Calu3 (cell line): ENCODE measurements at regions of chr1 and their contacts with region 1.

Region 1: DNA sequence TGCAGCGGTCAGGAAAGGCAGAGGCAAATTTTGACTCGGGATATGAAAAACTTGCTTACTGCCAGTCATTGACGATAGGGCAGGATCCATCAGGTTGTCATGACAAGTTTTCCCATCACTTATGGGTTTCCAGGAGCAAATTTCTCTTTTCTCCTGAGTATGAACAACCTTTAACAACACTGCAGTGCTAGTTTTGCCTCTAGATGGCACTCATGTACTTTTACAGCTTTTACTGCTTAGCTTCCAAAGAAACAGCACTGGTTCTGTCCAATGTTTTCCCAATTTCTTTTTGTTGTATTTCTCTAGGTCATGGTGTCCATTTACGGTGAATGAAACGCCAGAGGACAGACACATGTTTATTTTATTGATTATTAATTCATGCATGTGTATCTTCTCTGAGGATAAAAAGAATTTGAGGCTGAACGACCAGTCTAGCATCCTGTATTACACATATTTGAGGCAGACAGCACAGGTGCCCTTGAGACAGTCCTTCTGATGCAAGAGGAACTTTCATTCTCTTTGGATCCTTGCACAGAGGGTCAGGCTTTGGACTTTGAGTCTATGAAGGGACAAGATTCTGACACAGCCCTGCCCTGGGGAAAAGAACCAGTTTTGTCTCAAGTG is 112.3 kb upstream of the TRABD2B start:
- DNase-seq: peak; percentile 44
- H3K4me3 Mint-ChIP-seq: no peak overlapping the region
- H3K27ac Mint-ChIP-seq: no peak overlapping the region
- H3K4me1 Mint-ChIP-seq: no peaks in the 10 kb centered on the region
- H3K27me3 Mint-ChIP-seq: peaks cover 42% of the 10 kb centered on the region
- CTCF ChIP-seq: peak; percentile 81

Region 2: DNA sequence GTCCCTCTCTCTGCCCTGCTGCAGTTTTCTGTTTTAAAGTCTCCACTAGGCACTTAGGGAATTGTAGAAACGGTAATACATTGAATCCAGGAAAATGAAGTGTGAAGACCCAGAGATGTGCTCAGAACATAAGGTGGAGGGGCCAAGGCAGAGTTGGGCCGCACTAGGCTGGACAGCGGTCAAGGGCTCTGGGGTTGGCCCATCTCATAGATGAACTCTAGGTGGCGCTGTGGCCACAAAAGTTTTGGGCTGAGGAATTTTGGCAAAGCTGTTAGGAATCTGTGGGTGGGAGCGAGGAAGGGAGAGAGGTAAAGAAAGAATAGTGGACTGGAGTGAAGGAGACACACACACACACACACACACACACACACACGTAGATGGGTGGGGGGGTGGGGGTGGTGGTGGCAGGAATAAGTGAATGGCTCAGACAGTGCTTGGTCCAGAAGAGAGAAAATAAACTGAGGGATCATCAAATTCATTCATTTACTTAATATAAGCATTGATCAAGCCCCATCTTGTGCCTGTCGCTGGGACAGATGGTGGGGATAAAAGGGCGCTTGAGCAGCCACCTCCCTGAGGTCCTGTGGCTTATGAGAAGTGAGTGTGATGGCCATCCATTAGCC is 370.8 kb before region 1 on chr1:
- CTCF ChIA-PET with region 1: no interaction called
- intact Hi-C with region 1: loop called (anchors 10 kb)
- DNase-seq: peak; percentile 72
- H3K4me3 Mint-ChIP-seq: no peak overlapping the region
- H3K27ac Mint-ChIP-seq: no peak overlapping the region
- H3K4me1 Mint-ChIP-seq: no peaks in the 10 kb centered on the region
- H3K27me3 Mint-ChIP-seq: peaks cover 33% of the 10 kb centered on the region
- CTCF ChIP-seq: peak; percentile 66

Region 3: DNA sequence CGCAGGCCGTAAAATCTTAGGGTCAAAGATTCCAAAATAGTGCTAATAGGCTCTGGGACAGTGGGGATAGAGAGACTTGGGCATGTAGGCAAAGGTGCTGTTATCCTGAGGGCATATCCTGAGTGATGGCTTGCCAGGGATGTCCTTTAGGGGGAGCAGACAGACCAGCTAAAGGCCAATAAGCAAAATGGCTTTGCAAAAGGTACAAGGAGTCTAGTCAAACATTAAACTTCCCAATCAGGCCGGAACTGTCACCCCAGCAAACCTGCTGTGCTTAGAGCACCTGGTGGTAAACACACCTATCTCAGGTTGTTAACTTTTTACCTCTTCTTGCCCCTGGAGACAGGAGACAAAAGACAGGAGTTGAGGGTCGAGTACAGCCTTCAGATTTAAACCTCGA is 161.4 kb before region 1 on chr1:
- CTCF ChIA-PET with region 1: no interaction called
- intact Hi-C with region 1: loop called (anchors 1 kb)
- DNase-seq: peak; percentile 73
- H3K4me3 Mint-ChIP-seq: no peak overlapping the region
- H3K27ac Mint-ChIP-seq: no peak overlapping the region
- H3K4me1 Mint-ChIP-seq: peaks cover 53% of the 10 kb centered on the region
- H3K27me3 Mint-ChIP-seq: no peaks in the 10 kb centered on the region
- CTCF ChIP-seq: peak; percentile 62

Region 4: DNA sequence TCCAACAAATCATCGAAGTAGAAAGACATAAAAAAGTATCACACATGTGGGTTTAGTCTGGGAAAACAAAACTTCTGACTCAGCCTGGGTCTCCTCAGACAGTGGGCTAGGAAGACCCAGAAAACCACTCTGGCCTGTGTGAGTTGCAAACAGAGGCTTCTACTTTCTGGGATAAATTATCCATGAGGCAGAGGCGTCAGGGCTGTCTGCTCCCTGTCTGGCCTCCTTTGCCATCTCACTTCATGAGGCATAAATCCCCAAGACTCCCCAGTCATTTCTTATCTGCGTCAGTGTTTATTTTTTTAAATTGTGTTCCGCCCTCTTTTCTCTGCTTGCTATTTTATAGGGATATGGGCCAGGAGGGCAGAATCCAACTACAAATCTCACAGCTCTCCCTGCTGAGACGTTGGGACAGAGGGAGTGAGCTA is 31.7 kb before region 1 on chr1:
- CTCF ChIA-PET with region 1: no interaction called
- intact Hi-C with region 1: loop called (anchors 1 kb)
- DNase-seq: no peak
- H3K4me3 Mint-ChIP-seq: no peak overlapping the region
- H3K27ac Mint-ChIP-seq: no peak overlapping the region
- H3K4me1 Mint-ChIP-seq: no peaks in the 10 kb centered on the region
- H3K27me3 Mint-ChIP-seq: peaks cover 66% of the 10 kb centered on the region
- CTCF ChIP-seq: no peak

Region 5: GRCh38 chr1:48202030-48202752 is 92.7 kb after region 1 on chr1:
- CTCF ChIA-PET with region 1: interaction called, 17 read pairs
- intact Hi-C with region 1: loop called (anchors 1 kb)
- DNase-seq: peak; percentile 72
- H3K4me3 Mint-ChIP-seq: no peak overlapping the region
- H3K27ac Mint-ChIP-seq: no peak overlapping the region
- H3K4me1 Mint-ChIP-seq: no peaks in the 10 kb centered on the region
- H3K27me3 Mint-ChIP-seq: peaks cover 32% of the 10 kb centered on the region
- CTCF ChIP-seq: peak; percentile 73

Region 6: DNA sequence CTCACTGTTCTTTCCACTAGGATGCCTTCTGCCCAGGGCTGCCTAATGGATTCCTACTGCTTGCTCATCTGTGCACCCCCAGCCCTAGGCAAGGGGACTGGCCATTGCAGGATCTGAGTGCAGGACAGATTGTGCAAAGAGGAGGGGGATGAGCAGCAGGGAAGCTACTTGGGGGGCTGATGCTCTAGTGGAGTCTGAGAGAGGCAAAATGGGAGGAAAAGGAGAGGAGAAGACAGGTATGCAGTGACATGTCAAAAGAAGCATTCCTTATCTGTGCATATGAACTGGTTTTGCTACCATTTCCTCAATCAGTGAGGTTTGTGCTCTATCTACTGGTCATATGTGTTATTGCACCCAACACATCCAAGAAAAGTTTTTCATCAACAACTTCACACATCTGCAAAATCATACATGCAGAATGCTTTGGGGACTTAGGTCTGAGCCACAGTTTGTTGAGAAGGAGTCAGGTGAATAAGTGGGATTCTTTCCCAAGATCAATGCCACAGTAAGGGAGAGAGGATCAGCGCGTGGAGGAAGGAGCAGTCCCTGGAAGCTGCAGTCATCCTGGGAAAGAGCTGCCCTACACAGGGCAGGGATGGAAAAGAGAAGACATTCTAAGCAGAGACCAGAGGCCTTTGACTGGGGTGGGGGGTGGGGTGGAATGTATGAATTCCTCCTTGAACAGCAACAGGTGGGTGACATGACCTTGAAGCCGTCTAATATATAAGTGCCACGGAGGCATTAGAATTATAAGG is 127.4 kb after region 1 on chr1:
- CTCF ChIA-PET with region 1: no interaction called
- intact Hi-C with region 1: loop called (anchors 1 kb)
- DNase-seq: peak; percentile 12
- H3K4me3 Mint-ChIP-seq: no peak overlapping the region
- H3K27ac Mint-ChIP-seq: no peak overlapping the region
- H3K4me1 Mint-ChIP-seq: no peaks in the 10 kb centered on the region
- H3K27me3 Mint-ChIP-seq: peaks cover 10% of the 10 kb centered on the region
- CTCF ChIP-seq: peak; percentile 29

Region 7: GRCh38 chr1:48498096-48498791 is 388.7 kb after region 1 on chr1:
- CTCF ChIA-PET with region 1: interaction called, 5 read pairs
- intact Hi-C with region 1: loop called (anchors 2 kb)
- DNase-seq: peak; percentile 87
- H3K4me3 Mint-ChIP-seq: peak overlapping the region; percentile 22
- H3K27ac Mint-ChIP-seq: no peak overlapping the region
- H3K4me1 Mint-ChIP-seq: peaks cover 20% of the 10 kb centered on the region
- H3K27me3 Mint-ChIP-seq: no peaks in the 10 kb centered on the region
- CTCF ChIP-seq: peak; percentile 77